GM13976 (cell line): ENCODE measurements at regions of chr20 and their contacts with region 1.

Region 1: GRCh38 chr20:15708984-15709598 is 864.2 kb downstream of the KIF16B start:
- DNase-seq: peak; percentile 62
- CTCF ChIP-seq: peak; percentile 71

Region 2: GRCh38 chr20:14888134-14888533 is 821.0 kb before region 1 on chr20:
- in situ Hi-C with region 1: no loop called
- DNase-seq: no peak
- CTCF ChIP-seq: no peak

Region 3: GRCh38 chr20:15498926-15499325 is 210.2 kb before region 1 on chr20:
- in situ Hi-C with region 1: no loop called
- DNase-seq: no peak
- CTCF ChIP-seq: no peak

Region 4: GRCh38 chr20:16115911-16116552 is 406.9 kb after region 1 on chr20:
- in situ Hi-C with region 1: no loop called
- DNase-seq: no peak
- CTCF ChIP-seq: no peak

Region 5: DNA sequence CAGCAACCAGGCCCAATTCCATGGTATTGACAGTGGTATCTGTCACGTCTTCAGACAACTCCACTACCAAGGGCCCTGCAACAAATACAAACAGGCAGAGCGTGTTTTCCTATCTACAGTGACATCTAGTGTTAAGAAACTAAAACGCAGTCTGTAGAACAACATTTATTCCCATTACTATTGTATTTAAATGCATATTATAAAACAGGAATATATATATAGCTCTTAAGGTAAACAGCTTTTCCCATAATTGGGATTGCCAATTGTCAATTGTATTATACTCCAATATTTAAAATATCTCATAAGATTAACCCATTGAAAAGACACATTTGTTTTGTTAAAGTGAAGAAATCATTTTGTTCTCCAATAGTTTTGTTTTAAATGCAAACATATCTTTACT is 766.9 kb after region 1 on chr20:
- in situ Hi-C with region 1: loop called (anchors 25 kb)
- DNase-seq: peak; percentile 31
- CTCF ChIP-seq: peak; percentile 48